CD4-positive, alpha-beta T cell (primary cell): ENCODE measurements at regions of chr12 and their contacts with region 1.

Region 1: GRCh38 chr12:50979369-50980052 is 27.2 kb downstream of the HIGD1C start:
- DNase-seq: peak in 2 of 14 experiments; percentile 19 to 21
- ATAC-seq: no peak
- H3K4me3 ChIP-seq: no peak overlapping the region
- H3K4me3 Mint-ChIP-seq: no peak overlapping the region
- H3K27ac ChIP-seq: no peak overlapping the region
- H3K27ac Mint-ChIP-seq: peak overlapping the region; percentile 48
- H3K4me1 ChIP-seq: peaks cover 3% of the 10 kb centered on the region
- H3K4me1 Mint-ChIP-seq: peaks cover 6% of the 10 kb centered on the region
- H3K27me3 ChIP-seq: no peaks in the 10 kb centered on the region
- H3K27me3 Mint-ChIP-seq: no peaks in the 10 kb centered on the region
- CTCF ChIP-seq: no peak

Region 2: DNA sequence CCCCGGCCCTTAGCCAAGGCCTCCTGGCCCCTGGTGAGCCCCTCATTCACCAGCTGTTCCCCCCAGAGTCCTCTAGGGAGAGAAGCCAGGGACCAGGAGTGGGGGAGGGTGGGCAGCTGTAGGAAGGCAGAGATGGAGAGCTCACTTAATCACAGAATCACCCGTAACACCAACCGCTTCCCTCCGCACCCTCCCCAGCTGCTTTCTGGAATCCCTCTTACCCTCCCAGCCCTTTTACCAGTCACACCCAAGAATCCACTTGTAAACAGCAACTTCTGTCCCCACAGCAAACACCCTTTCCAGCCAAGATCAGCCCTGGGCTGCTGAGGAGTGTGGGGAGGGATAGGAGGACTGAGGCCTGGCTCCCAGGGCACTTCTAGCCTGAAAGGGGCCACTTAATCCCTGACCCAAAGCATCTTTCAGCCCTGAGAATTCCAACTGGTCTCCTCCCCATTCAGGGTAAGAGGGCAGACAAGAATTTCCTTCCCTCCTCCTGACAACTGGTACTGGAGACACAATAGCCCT is 1170.1 kb before region 1 on chr12:
- CTCF ChIA-PET with region 1: no interaction called
- POLR2A ChIA-PET with region 1: no interaction called
- intact Hi-C with region 1: loop called in 1 of 2 experiments (anchors 5 kb)
- DNase-seq: no peak
- ATAC-seq: no peak
- H3K4me3 ChIP-seq: no peak overlapping the region
- H3K4me3 Mint-ChIP-seq: no peak overlapping the region
- H3K27ac ChIP-seq: no peak overlapping the region
- H3K27ac Mint-ChIP-seq: no peak overlapping the region
- H3K4me1 ChIP-seq: no peaks in the 10 kb centered on the region
- H3K4me1 Mint-ChIP-seq: no peaks in the 10 kb centered on the region
- H3K27me3 ChIP-seq: no peaks in the 10 kb centered on the region
- H3K27me3 Mint-ChIP-seq: no peaks in the 10 kb centered on the region
- CTCF ChIP-seq: no peak